Colonic mucosa (tissue), 4 donors: ENCODE measurements at regions of chr15 and their contacts with region 1.

Region 1: GRCh38 chr15:62389885-62390790 is 225.1 kb upstream of the C2CD4B start:
- DNase-seq: peak; percentile 70
- H3K4me3 ChIP-seq: peak within 1 kb of the TSS; percentile 99
- H3K27ac ChIP-seq: peak within 1 kb of the TSS; percentile 66
- H3K4me1 ChIP-seq: no peaks in the 10 kb centered on the region
- H3K27me3 ChIP-seq: no peaks in the 10 kb centered on the region
- CTCF ChIP-seq: no peak

Region 2: GRCh38 chr15:62549345-62549970 is 159.3 kb after region 1 on chr15:
- intact Hi-C with region 1: loop called (anchors 10 kb)
- DNase-seq: no peak
- H3K4me3 ChIP-seq: no peak overlapping the region
- H3K27ac ChIP-seq: no peak overlapping the region
- H3K4me1 ChIP-seq: no peaks in the 10 kb centered on the region
- H3K27me3 ChIP-seq: no peaks in the 10 kb centered on the region
- CTCF ChIP-seq: peak; percentile 51

Region 3: GRCh38 chr15:62624547-62625378 is 234.6 kb after region 1 on chr15:
- intact Hi-C with region 1: no loop called
- DNase-seq: no peak
- H3K4me3 ChIP-seq: no peak overlapping the region
- H3K27ac ChIP-seq: no peak overlapping the region
- H3K4me1 ChIP-seq: no peaks in the 10 kb centered on the region
- H3K27me3 ChIP-seq: no peaks in the 10 kb centered on the region
- CTCF ChIP-seq: no peak

Region 4: DNA sequence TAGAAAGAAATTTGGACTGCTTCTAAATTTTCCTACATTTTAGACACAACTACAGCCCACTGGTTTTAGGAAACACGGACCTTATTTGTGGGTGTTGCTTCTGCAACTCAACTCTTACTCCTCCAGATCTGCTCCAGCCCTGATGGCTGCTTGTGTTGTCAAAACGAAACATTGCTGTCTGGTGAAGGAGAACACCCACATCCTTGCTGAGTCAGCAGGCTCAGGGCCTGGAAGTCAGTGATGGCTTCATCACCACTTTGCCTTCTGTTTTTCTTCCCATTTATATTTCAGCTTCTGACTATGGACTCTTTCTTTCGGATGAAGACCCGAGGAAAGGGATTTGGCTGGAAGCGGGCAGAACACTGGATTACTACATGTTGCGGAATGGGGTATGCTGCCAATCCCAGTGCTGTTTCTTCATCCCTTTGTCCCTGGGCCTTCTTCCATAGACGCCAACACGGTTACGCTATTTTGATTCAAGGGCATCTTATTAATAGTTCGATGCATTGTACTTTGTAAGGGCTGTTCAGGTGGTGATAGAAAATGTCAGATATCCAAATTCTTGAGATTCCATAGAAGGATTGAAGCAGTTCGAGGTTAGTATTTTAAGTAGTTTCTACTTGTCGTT is 259.8 kb after region 1 on chr15:
- intact Hi-C with region 1: loop called (anchors 5 kb)
- DNase-seq: no peak
- H3K4me3 ChIP-seq: no peak overlapping the region
- H3K27ac ChIP-seq: no peak overlapping the region
- H3K4me1 ChIP-seq: peaks cover 3% of the 10 kb centered on the region
- H3K27me3 ChIP-seq: no peaks in the 10 kb centered on the region
- CTCF ChIP-seq: no peak

Region 5: DNA sequence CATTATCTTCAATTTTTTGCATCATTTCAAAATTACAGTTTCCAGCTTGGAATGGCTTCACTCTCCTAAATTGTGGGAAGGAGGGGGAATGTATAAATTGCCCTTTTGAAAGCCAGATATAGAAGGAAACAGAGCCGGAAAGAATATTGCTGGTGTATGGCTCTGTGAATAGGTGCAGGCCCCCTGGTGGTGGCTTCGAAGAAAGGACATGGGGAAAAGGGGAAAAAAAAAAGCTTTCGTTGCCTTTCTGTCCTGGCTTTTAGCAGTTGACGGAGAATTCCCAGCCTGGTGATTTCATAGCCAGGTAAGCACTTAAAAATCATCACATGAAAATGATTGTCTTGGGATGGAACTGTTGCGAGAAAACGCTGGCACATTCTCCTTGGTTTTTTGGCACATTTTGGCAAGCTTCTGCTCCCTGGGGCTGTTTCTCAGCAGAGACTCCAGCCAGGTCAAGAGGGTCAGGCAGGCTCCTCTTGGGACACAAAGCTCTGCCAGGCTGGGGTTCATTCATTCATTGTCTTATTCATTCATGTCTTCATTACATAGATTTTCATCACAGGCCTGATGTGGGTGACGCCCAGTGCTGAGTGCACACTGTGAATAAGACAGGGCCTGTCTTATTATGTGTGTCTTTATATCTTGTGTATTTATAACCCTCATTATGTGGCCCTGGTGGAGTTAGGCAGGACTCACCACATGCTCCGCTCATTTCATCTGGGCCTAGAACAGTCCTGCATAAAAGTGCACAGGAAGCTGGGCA is 352.5 kb after region 1 on chr15:
- intact Hi-C with region 1: loop called (anchors 10 kb)
- DNase-seq: peak; percentile 51
- H3K4me3 ChIP-seq: no peak overlapping the region
- H3K27ac ChIP-seq: peak overlapping the region; percentile 6
- H3K4me1 ChIP-seq: no peaks in the 10 kb centered on the region
- H3K27me3 ChIP-seq: no peaks in the 10 kb centered on the region
- CTCF ChIP-seq: peak; percentile 69